ENCODE measurements at regions of chr3 and their contacts with region 1.

Region 1: DNA sequence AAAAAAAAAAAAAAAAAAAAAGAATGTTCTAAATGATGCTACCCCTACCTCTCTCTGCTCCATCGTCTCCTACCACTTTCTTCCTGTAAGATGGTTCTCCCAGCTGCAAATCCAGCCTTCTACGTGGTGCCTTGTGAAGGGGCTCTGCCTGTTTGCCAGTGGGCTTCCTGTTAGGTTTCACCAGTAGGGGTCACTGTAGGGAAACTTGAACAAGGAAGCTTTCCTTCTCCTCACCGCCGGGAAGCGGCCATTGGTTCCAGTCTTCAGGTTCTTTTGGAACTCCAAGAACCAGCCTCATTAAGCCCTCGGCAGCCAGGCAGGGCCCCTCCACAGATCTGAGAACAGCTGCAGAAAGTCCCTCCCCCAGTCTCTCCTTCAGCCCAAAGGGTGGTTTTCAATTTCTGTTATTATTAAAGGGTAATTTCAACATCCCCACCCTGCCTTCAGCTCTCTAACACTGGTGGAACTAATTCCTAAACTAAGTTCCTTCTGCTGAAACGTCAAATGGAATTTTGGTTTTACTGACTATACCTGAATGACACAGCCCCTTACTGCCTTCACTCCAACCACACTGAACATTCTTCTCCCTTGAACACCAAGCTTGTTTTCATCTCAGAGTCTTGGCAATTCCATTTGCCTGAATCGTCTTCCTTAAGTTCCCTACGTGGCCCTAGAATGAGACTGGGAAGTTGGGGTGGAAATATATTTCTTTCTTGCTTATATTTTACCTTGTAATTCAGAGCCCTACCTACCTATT is 13.5 kb downstream of the MCCC1 start:
- DNase-seq: no peak
- ATAC-seq: no peak
- H3K4me3 ChIP-seq: no peak overlapping the region
- H3K27ac ChIP-seq: no peak overlapping the region
- H3K4me1 ChIP-seq: no peaks in the 10 kb centered on the region
- H3K27me3 ChIP-seq: no peaks in the 10 kb centered on the region
- CTCF ChIP-seq: peak; percentile 73

Region 2: GRCh38 chr3:181913254-181913653 is 1172.6 kb before region 1 on chr3:
- CTCF ChIA-PET with region 1: no interaction called
- POLR2A ChIA-PET with region 1: no interaction called
- in situ Hi-C with region 1: no loop called
- intact Hi-C with region 1: no loop called
- DNase-seq: no peak
- ATAC-seq: no peak
- H3K4me3 ChIP-seq: no peak overlapping the region
- H3K27ac ChIP-seq: no peak overlapping the region
- H3K4me1 ChIP-seq: no peaks in the 10 kb centered on the region
- H3K27me3 ChIP-seq: no peaks in the 10 kb centered on the region
- CTCF ChIP-seq: no peak

Region 3: DNA sequence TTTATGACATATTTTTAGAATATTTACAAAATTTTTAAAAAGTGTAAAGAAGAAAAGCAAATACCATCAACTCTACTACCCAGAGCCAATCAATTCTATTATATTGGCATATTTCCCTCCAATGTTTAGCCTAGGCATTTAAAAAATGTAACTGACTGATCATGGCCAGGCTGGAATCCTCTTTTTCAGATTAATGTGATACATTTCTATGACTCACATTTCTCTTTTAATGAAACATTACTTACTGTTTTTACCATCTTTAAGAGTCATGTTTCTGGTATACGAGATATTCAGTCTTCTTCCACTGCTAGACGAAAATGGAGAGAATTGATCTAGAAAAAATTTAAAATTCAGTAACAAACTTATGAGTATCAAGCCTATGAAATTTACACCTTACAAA is 52.1 kb before region 1 on chr3:
- CTCF ChIA-PET with region 1: interaction called, 12 read pairs
- POLR2A ChIA-PET with region 1: no interaction called
- in situ Hi-C with region 1: no loop called
- intact Hi-C with region 1: no loop called
- DNase-seq: no peak
- ATAC-seq: no peak
- H3K4me3 ChIP-seq: no peak overlapping the region
- H3K27ac ChIP-seq: no peak overlapping the region
- H3K4me1 ChIP-seq: no peaks in the 10 kb centered on the region
- H3K27me3 ChIP-seq: no peaks in the 10 kb centered on the region
- CTCF ChIP-seq: no peak

Region 4: DNA sequence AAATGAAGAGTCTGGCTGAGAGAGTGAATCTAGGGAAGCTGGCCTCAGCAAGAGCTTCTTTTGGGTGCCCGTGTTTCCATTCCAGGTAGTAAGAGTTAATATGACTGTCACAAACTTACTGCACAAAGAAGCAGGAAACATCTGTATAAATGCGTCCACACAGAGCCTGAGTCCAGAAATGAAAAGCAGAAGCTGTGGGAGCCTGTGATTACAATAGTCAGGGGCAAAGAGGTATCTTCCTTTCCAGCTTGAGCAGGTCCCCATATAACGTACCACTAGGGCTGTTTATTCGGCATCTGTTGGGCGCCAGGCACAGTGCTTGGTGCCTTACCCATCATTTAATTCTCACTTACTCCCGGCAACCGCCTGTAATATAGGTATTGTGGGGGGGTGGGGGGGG is 126.8 kb after region 1 on chr3:
- CTCF ChIA-PET with region 1: no interaction called
- POLR2A ChIA-PET with region 1: no interaction called
- in situ Hi-C with region 1: no loop called
- intact Hi-C with region 1: no loop called
- DNase-seq: no peak
- ATAC-seq: no peak
- H3K4me3 ChIP-seq: no peak overlapping the region
- H3K27ac ChIP-seq: no peak overlapping the region
- H3K4me1 ChIP-seq: no peaks in the 10 kb centered on the region
- H3K27me3 ChIP-seq: no peaks in the 10 kb centered on the region; the same call in 1 of the 2 replicates
- CTCF ChIP-seq: no peak